Ovary (tissue), 10 donors: ENCODE measurements at regions of chr4 and their contacts with region 1.

Region 1: DNA sequence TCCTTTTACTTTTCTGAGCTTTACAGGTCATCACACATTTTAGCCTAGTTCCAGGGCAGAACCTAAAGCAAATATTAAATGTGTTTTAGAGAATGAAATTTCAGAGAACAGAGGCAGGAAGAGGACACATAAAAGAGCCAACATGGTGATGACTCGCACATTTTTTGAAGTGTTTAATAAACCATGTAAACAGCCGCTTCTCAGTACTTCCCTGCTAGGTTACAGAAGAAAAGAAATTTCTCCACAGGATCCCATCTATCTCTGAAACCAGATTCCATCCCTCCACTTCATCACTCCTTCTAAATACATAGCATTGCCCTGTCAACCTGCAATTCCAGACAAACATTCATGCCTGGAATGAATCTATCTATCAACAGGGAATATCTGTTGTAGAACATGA is 949.5 kb upstream of the PCDH7 start:
- DNase-seq: no peak
- H3K4me3 ChIP-seq: no peak overlapping the region
- H3K27ac ChIP-seq: no peak overlapping the region
- H3K4me1 ChIP-seq: no peaks in the 10 kb centered on the region
- H3K27me3 ChIP-seq: no peaks in the 10 kb centered on the region
- CTCF ChIP-seq: no peak
- EP300 ChIP-seq: no peak
- POLR2A ChIP-seq: no peak

Region 2: DNA sequence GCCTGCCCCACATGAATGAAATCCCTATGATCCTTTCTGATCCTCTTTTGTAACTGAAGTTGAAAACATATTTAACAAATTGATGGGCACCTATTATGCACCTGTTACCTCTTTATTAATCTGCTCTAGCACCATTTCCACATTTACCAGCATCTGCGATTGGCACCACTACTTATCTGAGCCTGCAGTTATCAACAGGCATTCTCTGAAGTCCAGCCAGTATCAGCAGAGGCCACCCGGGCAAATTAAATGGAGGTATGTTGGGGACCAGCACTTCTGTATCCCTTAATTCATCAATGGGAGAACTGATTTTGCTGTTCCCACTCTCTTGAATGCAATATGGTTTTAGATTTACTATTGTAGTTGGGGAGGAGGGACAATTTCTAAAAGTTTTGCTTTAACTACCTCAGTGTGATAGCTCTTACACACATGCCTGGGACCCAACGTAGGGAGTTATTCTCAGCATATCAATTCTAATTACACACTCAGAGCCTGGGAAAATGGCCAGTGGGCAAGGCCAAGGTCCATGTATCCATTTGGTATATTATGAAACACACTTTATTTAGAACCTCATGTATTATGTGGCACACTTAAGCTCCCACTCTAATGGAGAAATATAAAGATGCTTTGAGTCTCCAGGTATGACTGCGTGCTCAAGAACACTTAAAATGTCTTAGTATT is 977.6 kb before region 1 on chr4:
- intact Hi-C with region 1: loop called in 1 of 4 experiments (anchors 5 kb)
- DNase-seq: no peak
- H3K4me3 ChIP-seq: no peak overlapping the region
- H3K27ac ChIP-seq: no peak overlapping the region
- H3K4me1 ChIP-seq: no peaks in the 10 kb centered on the region
- H3K27me3 ChIP-seq: no peaks in the 10 kb centered on the region
- CTCF ChIP-seq: no peak
- EP300 ChIP-seq: no peak
- POLR2A ChIP-seq: no peak